ENCODE measurements at regions of chr2 and their contacts with region 1.

Region 1: DNA sequence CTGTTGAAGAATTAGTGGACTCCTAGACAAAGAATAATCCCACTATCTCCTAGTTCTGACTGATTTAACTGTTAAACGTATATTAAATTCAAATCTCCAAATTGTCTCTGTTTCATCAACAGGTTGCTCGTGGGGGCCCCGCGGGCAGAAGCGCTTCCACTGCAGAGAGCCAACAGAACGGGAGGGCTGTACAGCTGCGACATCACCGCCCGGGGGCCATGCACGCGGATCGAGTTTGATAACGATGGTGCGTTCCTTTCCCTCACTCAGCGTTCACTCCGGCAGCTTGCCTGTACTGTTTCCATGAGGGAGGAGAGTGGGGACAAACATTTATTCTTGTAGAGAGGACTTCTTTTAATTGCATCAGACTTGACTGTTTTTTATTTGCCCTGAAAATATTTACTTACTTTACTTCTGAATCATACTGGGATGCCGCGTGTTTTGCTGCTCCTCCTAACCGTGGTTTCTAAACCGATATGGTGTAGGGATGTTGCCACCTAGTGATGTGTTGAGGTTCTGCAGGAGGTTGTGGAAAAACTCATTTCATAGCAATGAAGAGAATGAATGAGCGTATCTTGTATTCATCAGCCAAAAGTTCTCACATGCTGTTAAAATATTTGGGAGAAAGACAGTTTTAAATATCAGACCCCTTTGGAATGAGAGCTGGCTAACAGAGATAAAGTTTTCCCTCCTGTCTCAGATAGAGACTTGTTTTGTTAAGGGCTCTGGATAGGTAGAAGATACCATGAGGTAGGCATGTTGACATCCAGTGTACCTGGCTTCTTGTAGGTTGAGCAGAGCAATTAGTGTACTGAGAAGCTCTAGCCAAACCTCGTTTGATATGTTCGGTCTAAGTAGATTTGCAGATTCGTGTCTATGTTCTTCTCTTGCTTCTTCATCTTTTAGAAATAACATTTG is 38.3 kb downstream of the ITGA6 start:
- DNase-seq: no peak
- H3K4me3 ChIP-seq: peak overlapping the region; percentile 12 to 44 (median 26)
- H3K27ac ChIP-seq: no peak overlapping the region
- H3K4me1 ChIP-seq: peaks cover 11 to 31% (median 13%) of the 10 kb centered on the region in 4 donors
- H3K27me3 ChIP-seq: peaks cover 0 to 27% (median 0%) of the 10 kb centered on the region in 4 donors
- CTCF ChIP-seq: peak; percentile 77 to 81 (median 80)
- EP300 ChIP-seq: no peak
- POLR2A ChIP-seq: no peak

Region 2: DNA sequence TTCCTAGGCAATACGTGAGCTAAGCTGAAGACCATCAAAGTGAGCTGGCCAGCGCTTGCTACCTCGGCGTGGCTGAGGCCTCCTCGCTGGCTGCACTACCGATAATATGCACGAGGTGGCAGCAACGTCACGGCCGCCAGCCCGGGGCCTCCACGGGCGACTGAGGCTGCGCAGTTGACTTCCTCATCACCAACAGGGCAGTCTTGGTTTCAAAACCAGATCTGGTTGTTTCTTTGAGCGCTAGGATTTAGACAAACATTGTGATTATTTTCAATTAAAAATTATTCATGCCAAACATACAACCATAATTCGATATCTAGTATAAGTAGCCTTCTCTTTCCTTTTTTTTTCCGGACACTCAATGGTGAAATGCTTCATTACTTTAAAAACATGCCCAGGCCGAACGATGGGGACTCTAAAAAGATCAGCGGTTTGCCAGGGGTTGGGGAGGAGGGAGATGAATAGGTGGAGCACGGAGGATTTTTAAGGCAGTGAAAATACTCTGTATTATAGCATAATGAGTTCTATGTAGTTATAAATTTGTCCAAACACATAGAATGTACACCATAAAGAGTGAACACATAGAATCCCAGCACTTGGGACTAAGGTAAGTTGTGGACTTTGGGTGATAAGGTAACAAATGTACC is 891.4 kb before region 1 on chr2:
- intact Hi-C with region 1: loop called (anchors 10 kb)
- DNase-seq: peak; percentile 93
- H3K4me3 ChIP-seq: no peak overlapping the region
- H3K27ac ChIP-seq: no peak overlapping the region
- H3K4me1 ChIP-seq: no peaks in the 10 kb centered on the region
- H3K27me3 ChIP-seq: peaks cover 0 to 9% (median 0%) of the 10 kb centered on the region in 4 donors
- CTCF ChIP-seq: peak in 2 of 3 experiments; percentile 97 to 98
- EP300 ChIP-seq: no peak
- POLR2A ChIP-seq: no peak

Region 3: GRCh38 chr2:172172513-172173173 is 293.0 kb before region 1 on chr2:
- intact Hi-C with region 1: loop called (anchors 2 kb)
- DNase-seq: no peak
- H3K4me3 ChIP-seq: peak overlapping the region; percentile 52 to 59 (median 58)
- H3K27ac ChIP-seq: peak overlapping the region in 1 of 4 donors; percentile 52
- H3K4me1 ChIP-seq: peaks cover 0 to 12% (median 12%) of the 10 kb centered on the region in 4 donors
- H3K27me3 ChIP-seq: peaks cover 0 to 23% (median 8%) of the 10 kb centered on the region in 4 donors
- CTCF ChIP-seq: peak; percentile 66 to 84 (median 82)
- EP300 ChIP-seq: no peak
- POLR2A ChIP-seq: no peak

Region 4: DNA sequence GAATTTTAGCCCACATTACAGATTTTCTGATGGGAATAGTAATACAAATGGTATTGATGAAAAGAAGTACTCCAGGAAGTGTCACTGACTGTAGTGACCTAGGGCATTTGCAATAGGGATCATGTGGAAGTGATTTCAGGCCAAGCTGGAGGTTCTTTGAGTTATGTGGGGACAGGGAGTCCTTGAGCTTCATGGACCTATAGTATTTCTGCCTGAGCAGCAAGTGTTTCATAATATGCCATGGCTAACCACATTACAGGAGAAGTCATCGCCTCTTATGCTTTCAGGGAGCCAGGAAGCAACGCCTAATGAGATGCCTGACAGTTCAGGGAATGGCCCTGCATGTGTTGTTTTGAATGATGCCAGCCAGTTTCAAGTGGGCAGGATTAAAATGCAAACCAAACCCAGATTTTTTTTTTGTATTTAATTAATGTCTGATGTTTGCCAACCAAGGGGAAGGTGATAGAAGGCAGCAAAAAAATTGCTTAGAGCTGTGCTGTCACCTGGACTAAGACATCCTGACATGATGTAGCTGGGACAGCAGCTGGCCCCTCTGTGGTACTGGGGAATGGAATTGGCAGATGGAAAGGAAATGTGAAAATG is 379.5 kb after region 1 on chr2:
- intact Hi-C with region 1: no loop called
- DNase-seq: no peak
- H3K4me3 ChIP-seq: no peak overlapping the region
- H3K27ac ChIP-seq: peak overlapping the region in 1 of 4 donors; percentile 18
- H3K4me1 ChIP-seq: peaks cover 0 to 17% (median 0%) of the 10 kb centered on the region in 4 donors
- H3K27me3 ChIP-seq: no peaks in the 10 kb centered on the region
- CTCF ChIP-seq: no peak
- EP300 ChIP-seq: no peak
- POLR2A ChIP-seq: no peak

Measured in esophagus muscularis mucosa (tissue), 4 donors.